CD4-positive, alpha-beta T cell (primary cell): ENCODE measurements at regions of chr1 and their contacts with region 1.

Region 1: GRCh38 chr1:112501810-112502641 is 6.7 kb upstream of the WNT2B start:
- DNase-seq: peak; percentile 17 to 73 (median 50)
- ATAC-seq: peak; percentile 72
- H3K4me3 ChIP-seq: peak overlapping the region; percentile 38
- H3K4me3 Mint-ChIP-seq: peak overlapping the region; percentile 65
- H3K27ac ChIP-seq: no peak overlapping the region
- H3K27ac Mint-ChIP-seq: no peak overlapping the region
- H3K4me1 ChIP-seq: peaks cover 11% of the 10 kb centered on the region
- H3K4me1 Mint-ChIP-seq: no peaks in the 10 kb centered on the region
- H3K27me3 ChIP-seq: peaks cover 51 to 54% of the 10 kb centered on the region in 2 experiments
- H3K27me3 Mint-ChIP-seq: peaks cover 81% of the 10 kb centered on the region
- CTCF ChIP-seq: peak; percentile 53

Region 2: GRCh38 chr1:110879758-110880606 is 1622.0 kb before region 1 on chr1:
- CTCF ChIA-PET with region 1: no interaction called
- POLR2A ChIA-PET with region 1: no interaction called
- intact Hi-C with region 1: no loop called
- DNase-seq: peak in 10 of 14 experiments; percentile 19 to 86 (median 53)
- ATAC-seq: peak; percentile 51
- H3K4me3 ChIP-seq: peak overlapping the region; percentile 33
- H3K4me3 Mint-ChIP-seq: peak overlapping the region; percentile 76
- H3K27ac ChIP-seq: peak overlapping the region; percentile 59 to 78
- H3K27ac Mint-ChIP-seq: peak overlapping the region; percentile 95
- H3K4me1 ChIP-seq: peaks cover 34% of the 10 kb centered on the region
- H3K4me1 Mint-ChIP-seq: peaks cover 89% of the 10 kb centered on the region
- H3K27me3 ChIP-seq: no peaks in the 10 kb centered on the region
- H3K27me3 Mint-ChIP-seq: no peaks in the 10 kb centered on the region
- CTCF ChIP-seq: no peak

Region 3: GRCh38 chr1:112599476-112599875 is 97.5 kb after region 1 on chr1:
- CTCF ChIA-PET with region 1: no interaction called
- POLR2A ChIA-PET with region 1: no interaction called
- intact Hi-C with region 1: no loop called
- DNase-seq: no peak
- ATAC-seq: no peak
- H3K4me3 ChIP-seq: no peak overlapping the region
- H3K4me3 Mint-ChIP-seq: no peak overlapping the region
- H3K27ac ChIP-seq: no peak overlapping the region
- H3K27ac Mint-ChIP-seq: no peak overlapping the region
- H3K4me1 ChIP-seq: no peaks in the 10 kb centered on the region
- H3K4me1 Mint-ChIP-seq: no peaks in the 10 kb centered on the region
- H3K27me3 ChIP-seq: no peaks in the 10 kb centered on the region
- H3K27me3 Mint-ChIP-seq: no peaks in the 10 kb centered on the region
- CTCF ChIP-seq: no peak

Region 4: GRCh38 chr1:112614460-112615065 is 112.5 kb after region 1 on chr1:
- CTCF ChIA-PET with region 1: interaction called, 14 read pairs
- POLR2A ChIA-PET with region 1: interaction called, 7 read pairs
- intact Hi-C with region 1: loop called (anchors 1 to 2 kb)
- DNase-seq: peak in 4 of 14 experiments; percentile 25 to 63 (median 55)
- ATAC-seq: no peak
- H3K4me3 ChIP-seq: no peak overlapping the region
- H3K4me3 Mint-ChIP-seq: peak overlapping the region; percentile 75
- H3K27ac ChIP-seq: no peak overlapping the region
- H3K27ac Mint-ChIP-seq: peak overlapping the region; percentile 78
- H3K4me1 ChIP-seq: peaks cover 11% of the 10 kb centered on the region
- H3K4me1 Mint-ChIP-seq: peaks cover 25% of the 10 kb centered on the region
- H3K27me3 ChIP-seq: no peaks in the 10 kb centered on the region
- H3K27me3 Mint-ChIP-seq: no peaks in the 10 kb centered on the region
- CTCF ChIP-seq: peak; percentile 60

Region 5: DNA sequence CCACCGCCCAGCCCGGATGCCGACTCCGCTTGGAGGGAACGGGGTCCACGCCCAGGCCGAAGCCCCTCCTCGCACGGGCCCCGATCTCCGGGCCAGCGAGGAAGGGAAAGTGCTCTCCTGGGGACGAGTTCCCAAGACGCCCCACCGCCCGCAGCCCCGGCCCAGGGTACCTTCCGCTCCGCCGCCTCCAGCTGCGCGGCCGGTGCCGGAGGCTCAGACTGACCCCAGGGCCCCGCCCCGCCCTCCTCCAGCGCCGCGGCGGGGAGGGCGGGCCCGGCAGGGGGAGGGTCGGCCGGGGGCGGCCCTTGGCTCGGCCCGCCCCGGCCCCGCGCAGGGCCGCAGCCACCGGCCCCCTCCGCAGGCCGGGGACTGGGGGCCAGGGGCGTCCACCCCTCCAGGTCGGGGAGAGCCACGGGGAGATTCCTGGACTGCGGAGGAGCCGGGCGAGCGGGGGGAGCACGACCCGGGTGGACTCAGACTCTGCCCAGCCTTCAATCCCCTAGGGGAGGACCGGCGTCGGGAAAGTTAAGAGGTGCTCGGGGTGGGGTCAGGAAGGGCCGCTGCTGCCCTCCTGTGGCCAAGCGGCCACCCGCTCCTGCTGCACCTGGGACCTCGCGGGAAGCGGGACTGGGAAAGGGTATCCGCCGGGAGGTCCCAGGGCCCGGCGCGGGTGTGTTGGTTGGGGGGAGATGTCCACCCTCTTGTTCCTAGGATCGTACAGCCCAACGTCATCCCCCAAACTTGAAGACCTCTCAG is 205.1 kb after region 1 on chr1 and contains the start of gene RHOC:
- CTCF ChIA-PET with region 1: interaction called, 13 read pairs
- POLR2A ChIA-PET with region 1: interaction called, 3 read pairs
- intact Hi-C with region 1: loop called (anchors 2 to 5 kb)
- DNase-seq: peak in 13 of 14 experiments; percentile 23 to 82 (median 53)
- ATAC-seq: peak; percentile 57
- H3K4me3 ChIP-seq: peak within 1 kb of the TSS; percentile 60
- H3K4me3 Mint-ChIP-seq: peak within 1 kb of the TSS; percentile 80
- H3K27ac ChIP-seq: peak within 1 kb of the TSS in 1 of 2 donors; percentile 60
- H3K27ac Mint-ChIP-seq: peak within 1 kb of the TSS; percentile 59
- H3K4me1 ChIP-seq: peaks cover 37% of the 10 kb centered on the region
- H3K4me1 Mint-ChIP-seq: peaks cover 50% of the 10 kb centered on the region
- H3K27me3 ChIP-seq: no peaks in the 10 kb centered on the region
- H3K27me3 Mint-ChIP-seq: no peaks in the 10 kb centered on the region
- CTCF ChIP-seq: peak; percentile 79
- total RNA-seq, gene RHOC: 11.9 to 12.7 TPM